PC-9 (cell line): ENCODE measurements at regions of chr10 and their contacts with region 1.

Region 1: DNA sequence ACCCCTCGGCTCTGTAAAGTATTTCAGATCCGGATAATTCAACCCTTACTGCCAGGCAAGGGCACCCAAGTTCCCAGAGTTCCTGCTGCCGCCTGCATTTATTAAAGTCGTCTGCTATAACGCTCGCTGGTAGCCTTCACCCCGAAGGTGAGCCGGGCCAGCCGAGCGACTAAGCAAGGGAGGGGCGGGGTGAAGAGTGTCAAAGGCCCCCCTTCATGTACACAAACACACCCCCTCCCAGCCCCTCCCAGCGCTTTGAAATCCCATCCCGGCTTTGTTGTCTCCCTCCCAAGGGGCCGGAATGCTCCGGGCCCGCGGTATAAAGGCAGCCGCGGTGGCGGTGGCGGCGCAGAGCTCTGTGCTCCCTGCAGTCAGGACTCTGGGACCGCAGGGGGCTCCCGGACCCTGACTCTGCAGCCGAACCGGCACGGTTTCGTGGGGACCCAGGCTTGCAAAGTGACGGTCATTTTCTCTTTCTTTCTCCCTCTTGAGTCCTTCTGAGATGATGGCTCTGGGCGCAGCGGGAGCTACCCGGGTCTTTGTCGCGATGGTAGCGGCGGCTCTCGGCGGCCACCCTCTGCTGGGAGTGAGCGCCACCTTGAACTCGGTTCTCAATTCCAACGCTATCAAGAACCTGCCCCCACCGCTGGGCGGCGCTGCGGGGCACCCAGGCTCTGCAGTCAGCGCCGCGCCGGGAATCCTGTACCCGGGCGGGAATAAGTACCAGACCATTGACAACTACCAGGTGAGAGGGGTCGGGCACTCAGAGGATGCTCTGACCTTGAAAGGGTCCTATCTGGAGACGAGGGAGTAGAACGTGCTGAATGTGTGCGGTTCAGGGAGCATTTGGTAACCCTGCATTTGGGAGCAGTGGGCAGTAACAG is at the start of gene DKK1:
- DNase-seq: peak; percentile 84 to 93
- H3K4me3 ChIP-seq: peak within 1 kb of the TSS; percentile 81
- H3K27ac ChIP-seq: peak within 1 kb of the TSS; percentile 27
- H3K4me1 ChIP-seq: peaks cover 49% of the 10 kb centered on the region
- H3K27me3 ChIP-seq: no peaks in the 10 kb centered on the region
- CTCF ChIP-seq: peak; percentile 99
- total RNA-seq, gene DKK1: 75.2 and 106 TPM in 2 replicates

Region 2: DNA sequence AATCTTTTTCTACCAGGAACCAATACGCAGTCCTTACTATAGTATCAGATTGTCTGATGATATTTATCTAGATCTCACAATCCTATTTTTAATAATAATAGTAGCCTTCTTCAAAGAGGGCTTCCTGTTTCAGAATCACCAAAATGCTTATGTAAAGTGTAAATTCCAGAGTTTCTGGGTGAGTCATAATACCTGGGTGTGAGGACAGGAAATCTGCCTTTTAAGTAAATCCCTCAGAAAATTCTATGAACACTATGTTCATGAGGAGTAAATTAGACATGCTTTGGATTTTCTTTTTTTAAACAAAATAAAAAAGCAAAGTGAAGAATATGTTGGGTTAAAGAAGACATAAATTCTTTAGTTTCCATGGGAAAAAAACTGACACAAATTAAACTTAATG is 20.4 kb after region 1 on chr10:
- CTCF ChIA-PET with region 1: no interaction called
- POLR2A ChIA-PET with region 1: no interaction called
- intact Hi-C with region 1: loop called (anchors 2 kb)
- DNase-seq: peak in 1 of 2 experiments; percentile 48
- H3K4me3 ChIP-seq: no peak overlapping the region
- H3K27ac ChIP-seq: peak overlapping the region; percentile 49
- H3K4me1 ChIP-seq: peaks cover 16% of the 10 kb centered on the region
- H3K27me3 ChIP-seq: no peaks in the 10 kb centered on the region
- CTCF ChIP-seq: no peak

Region 3: GRCh38 chr10:52451817-52452216 is 137.6 kb after region 1 on chr10:
- CTCF ChIA-PET with region 1: no interaction called
- POLR2A ChIA-PET with region 1: interaction called, 8 read pairs
- intact Hi-C with region 1: loop called (anchors 1 kb)
- DNase-seq: peak; percentile 25 to 98
- H3K4me3 ChIP-seq: no peak overlapping the region
- H3K27ac ChIP-seq: peak overlapping the region; percentile 77
- H3K4me1 ChIP-seq: peaks cover 45% of the 10 kb centered on the region
- H3K27me3 ChIP-seq: no peaks in the 10 kb centered on the region
- CTCF ChIP-seq: no peak

Region 4: DNA sequence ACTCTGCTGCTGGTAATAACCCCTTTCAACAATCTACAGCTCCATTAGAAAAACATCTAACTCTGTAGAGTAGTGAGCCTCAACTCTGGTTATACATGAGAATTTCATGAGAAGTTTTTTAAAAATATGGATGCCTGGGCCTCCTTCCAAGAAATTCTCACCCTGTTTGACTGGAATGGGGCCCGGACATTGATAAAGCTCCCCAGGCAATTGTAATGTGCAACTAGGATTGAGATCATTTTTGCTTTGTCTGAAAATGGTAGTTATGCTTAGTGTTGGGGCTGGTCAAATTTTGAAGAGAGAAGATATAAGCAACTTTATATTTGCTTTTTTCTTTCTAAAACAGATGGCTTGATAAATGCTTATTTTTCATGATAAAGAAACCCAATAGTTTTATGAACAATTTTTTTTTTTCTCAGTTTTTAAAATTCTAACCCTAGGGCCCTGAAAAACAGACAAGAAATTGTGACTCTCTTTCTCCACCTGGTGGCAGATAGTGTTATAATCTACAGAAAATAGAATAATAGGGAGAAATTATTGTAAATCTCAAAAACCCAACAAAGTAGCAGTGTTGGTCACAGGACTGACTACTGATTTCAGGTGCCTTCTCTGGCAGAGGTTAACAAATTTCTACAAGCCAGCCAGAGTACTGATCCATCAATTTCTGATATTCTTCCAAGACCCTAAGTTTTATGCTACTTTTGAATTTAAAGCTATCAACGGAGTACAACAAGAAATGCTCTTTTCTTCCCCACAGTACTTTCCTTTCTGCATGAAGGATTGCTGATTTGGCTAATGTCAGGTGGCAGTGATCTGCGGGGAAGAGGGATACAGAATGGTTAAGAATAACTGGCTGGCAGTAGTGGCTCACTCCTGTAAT is 174.7 kb after region 1 on chr10:
- CTCF ChIA-PET with region 1: interaction called, 15 read pairs
- POLR2A ChIA-PET with region 1: interaction called, 7 read pairs
- intact Hi-C with region 1: loop called (anchors 1 kb)
- DNase-seq: peak in 1 of 2 experiments; percentile 10
- H3K4me3 ChIP-seq: no peak overlapping the region
- H3K27ac ChIP-seq: no peak overlapping the region
- H3K4me1 ChIP-seq: peaks cover 23% of the 10 kb centered on the region
- H3K27me3 ChIP-seq: no peaks in the 10 kb centered on the region
- CTCF ChIP-seq: peak; percentile 92